Head of caudate nucleus (tissue), 42 donors: ENCODE measurements at regions of chr1 and their contacts with region 1.

Region 1: GRCh38 chr1:204989266-204990058 is 53.5 kb upstream of the CNTN2 start:
- DNase-seq: peak; percentile 74 to 95 (median 87)

Region 2: GRCh38 chr1:204941421-204942338 is 47.8 kb before region 1 on chr1:
- intact Hi-C with region 1: no loop called
- DNase-seq: peak; percentile 43 to 93 (median 78)

Region 3: DNA sequence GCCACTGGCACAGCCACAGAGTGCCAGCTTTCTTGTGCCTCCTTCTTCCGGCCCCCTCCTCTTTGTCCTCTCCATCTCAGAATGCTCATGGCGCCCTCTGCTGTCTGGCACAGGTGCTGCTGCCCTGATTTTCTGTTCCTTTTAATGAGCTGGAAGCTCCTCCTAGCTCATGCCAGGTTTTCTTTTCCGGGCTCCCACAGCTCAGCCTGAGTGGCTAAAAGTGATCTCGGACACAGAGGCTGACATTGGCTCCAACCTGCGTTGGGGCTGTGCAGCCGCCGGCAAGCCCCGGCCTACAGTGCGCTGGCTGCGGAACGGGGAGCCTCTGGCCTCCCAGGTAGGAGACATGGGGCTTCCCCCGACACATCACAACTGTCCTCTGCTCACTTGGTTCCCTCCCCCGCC is 72.2 kb after region 1 on chr1:
- intact Hi-C with region 1: loop called (anchors 2 kb)
- DNase-seq: peak; percentile 63 to 95 (median 88)

Region 4: DNA sequence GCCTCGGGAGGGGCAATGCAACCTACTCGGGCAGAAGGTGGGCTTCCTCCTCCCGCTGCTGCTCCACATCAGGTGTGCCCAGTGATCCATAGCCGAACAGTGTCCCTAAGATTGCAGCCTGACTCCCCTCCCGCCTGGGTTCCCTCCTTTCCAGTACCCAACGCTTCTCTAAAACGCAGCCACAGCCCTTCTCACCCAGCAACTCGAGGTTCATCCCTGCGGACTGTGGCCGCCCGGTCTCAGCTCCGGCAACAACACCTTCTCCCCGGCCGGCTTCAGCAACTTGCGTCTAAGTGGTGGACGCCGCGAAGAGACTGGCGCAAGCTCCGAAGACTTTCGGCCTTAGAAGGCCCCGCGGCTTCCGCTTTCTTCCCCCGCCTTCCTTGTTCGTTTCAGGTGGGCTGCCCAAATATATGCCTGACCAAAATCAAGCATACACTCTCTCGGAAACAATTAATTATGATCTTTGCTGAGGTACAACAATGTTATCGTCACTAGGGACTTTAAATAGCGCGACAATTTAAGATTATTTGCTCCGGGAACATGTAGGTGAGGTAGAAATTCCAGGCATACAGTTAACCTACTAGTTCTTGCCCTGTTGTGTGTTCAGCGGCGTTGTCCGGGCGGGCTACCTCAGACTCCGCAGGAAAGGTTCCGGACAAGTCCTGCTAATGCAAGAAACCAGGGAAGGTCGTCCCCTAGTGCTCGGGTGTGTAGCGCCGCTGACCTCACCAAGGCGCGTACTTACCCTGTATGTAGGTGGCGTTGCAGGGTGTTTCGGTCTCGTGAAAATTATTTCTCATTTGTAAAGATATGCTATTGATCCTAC is 132.4 kb after region 1 on chr1 and contains the start of gene RBBP5:
- intact Hi-C with region 1: loop called (anchors 5 kb)
- DNase-seq: peak; percentile 91 to 99 (median 96)

Region 5: DNA sequence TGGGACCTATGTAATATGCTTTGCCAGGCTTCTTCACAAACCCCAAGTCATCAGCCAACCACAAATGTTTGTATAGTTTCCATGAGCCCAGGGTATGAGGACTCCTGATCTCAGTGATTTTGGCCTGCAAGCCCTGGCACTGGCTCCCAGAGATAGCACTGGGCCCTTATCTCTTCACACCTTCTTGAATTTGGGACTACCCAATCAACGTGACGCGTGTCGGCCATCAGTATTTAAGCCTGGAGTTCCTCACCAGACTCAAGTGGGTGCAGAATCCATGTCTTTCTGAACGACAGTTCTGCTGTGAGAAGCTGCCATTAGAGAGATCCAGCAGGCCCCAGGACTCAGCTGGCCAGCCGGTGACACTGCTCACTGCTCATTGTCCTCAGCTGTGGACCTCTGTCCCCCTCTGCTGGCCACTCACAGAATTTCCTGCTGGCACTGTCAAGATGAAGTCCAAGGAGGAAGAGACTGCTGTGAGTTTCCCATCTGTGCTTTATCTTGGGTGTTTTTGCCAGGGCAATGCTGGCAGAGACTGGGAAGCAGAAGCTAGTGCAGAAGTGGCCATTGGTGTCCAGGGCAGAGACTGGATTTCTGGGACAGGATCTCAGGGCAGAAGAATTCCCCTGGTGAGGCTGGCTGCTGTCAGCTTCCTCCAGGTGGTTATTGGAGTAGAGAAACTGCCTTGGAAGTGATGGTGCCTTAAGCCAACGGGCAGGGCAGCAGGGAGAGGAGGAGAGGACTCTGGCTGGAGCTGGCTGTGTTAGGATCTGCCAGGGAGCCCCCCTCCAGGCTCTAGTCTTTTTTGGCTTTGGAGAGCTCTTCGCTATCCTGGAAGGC is 266.7 kb after region 1 on chr1:
- intact Hi-C with region 1: loop called (anchors 5 kb)
- DNase-seq: peak; percentile 80 to 98 (median 95)